Activated CD4-positive, alpha-beta memory T cell treated with anti-CD3 and anti-CD28 coated beads for 36 hours (primary cell): ENCODE measurements at regions of chr13 and their contacts with region 1.

Region 1: GRCh38 chr13:97855570-97856303 is 97.7 kb upstream of the IPO5 start:
- DNase-seq: peak; percentile 22
- H3K4me3 Mint-ChIP-seq: no peak overlapping the region
- H3K27ac Mint-ChIP-seq: no peak overlapping the region
- H3K4me1 Mint-ChIP-seq: no peaks in the 10 kb centered on the region
- H3K27me3 Mint-ChIP-seq: peaks cover 3% of the 10 kb centered on the region

Region 2: GRCh38 chr13:97866346-97866745 is 10.6 kb after region 1 on chr13:
- CTCF ChIA-PET with region 1: interaction called, 14 read pairs
- POLR2A ChIA-PET with region 1: no interaction called
- intact Hi-C with region 1: no loop called
- DNase-seq: no peak
- H3K4me3 Mint-ChIP-seq: no peak overlapping the region
- H3K27ac Mint-ChIP-seq: no peak overlapping the region
- H3K4me1 Mint-ChIP-seq: no peaks in the 10 kb centered on the region
- H3K27me3 Mint-ChIP-seq: peaks cover 1% of the 10 kb centered on the region

Region 3: GRCh38 chr13:97911311-97912128 is 55.8 kb after region 1 on chr13:
- CTCF ChIA-PET with region 1: interaction called, 17 read pairs
- POLR2A ChIA-PET with region 1: no interaction called
- intact Hi-C with region 1: no loop called
- DNase-seq: peak; percentile 38
- H3K4me3 Mint-ChIP-seq: no peak overlapping the region
- H3K27ac Mint-ChIP-seq: no peak overlapping the region
- H3K4me1 Mint-ChIP-seq: no peaks in the 10 kb centered on the region
- H3K27me3 Mint-ChIP-seq: peaks cover 16% of the 10 kb centered on the region

Region 4: GRCh38 chr13:98842864-98843481 is 987.2 kb after region 1 on chr13:
- CTCF ChIA-PET with region 1: interaction called, 7 read pairs
- POLR2A ChIA-PET with region 1: no interaction called
- intact Hi-C with region 1: loop called (anchors 10 kb)
- DNase-seq: peak; percentile 79
- H3K4me3 Mint-ChIP-seq: no peak overlapping the region
- H3K27ac Mint-ChIP-seq: no peak overlapping the region
- H3K4me1 Mint-ChIP-seq: no peaks in the 10 kb centered on the region
- H3K27me3 Mint-ChIP-seq: no peaks in the 10 kb centered on the region